A549 (cell line): ENCODE measurements at regions of chr11 and their contacts with region 1.

Region 1: GRCh38 chr11:44611687-44612434 is 46.4 kb downstream of the CD82 start:
- DNase-seq: no peak
- ATAC-seq: no peak
- H3K4me3 ChIP-seq: no peak overlapping the region
- H3K27ac ChIP-seq: no peak overlapping the region
- H3K4me1 ChIP-seq: peaks cover 12% of the 10 kb centered on the region; the same call in 2 of the 3 replicates
- CTCF ChIP-seq: no peak
- EP300 ChIP-seq: no peak
- POLR2A ChIP-seq: no peak
- RAD21 ChIP-seq: no peak

Region 2: GRCh38 chr11:44596525-44597276 is 15.2 kb before region 1 on chr11:
- CTCF ChIA-PET with region 1: interaction called, 139 read pairs
- POLR2A ChIA-PET with region 1: no interaction called
- DNase-seq: no peak
- ATAC-seq: no peak
- H3K4me3 ChIP-seq: no peak overlapping the region
- H3K27ac ChIP-seq: no peak overlapping the region
- H3K4me1 ChIP-seq: peaks cover 8% of the 10 kb centered on the region
- CTCF ChIP-seq: no peak
- EP300 ChIP-seq: no peak
- POLR2A ChIP-seq: no peak
- RAD21 ChIP-seq: no peak

Region 3: GRCh38 chr11:44651535-44652155 is 39.8 kb after region 1 on chr11:
- CTCF ChIA-PET with region 1: no interaction called
- POLR2A ChIA-PET with region 1: no interaction called
- DNase-seq: no peak
- ATAC-seq: peak; percentile 32 to 44; a peak in 3 of 6 replicates
- H3K4me3 ChIP-seq: no peak overlapping the region
- H3K27ac ChIP-seq: no peak overlapping the region
- H3K4me1 ChIP-seq: no peaks in the 10 kb centered on the region
- CTCF ChIP-seq: no peak
- EP300 ChIP-seq: no peak
- POLR2A ChIP-seq: no peak
- RAD21 ChIP-seq: no peak